Aorta (tissue), 5 donors: ENCODE measurements at regions of chr18 and their contacts with region 1.

Region 1: DNA sequence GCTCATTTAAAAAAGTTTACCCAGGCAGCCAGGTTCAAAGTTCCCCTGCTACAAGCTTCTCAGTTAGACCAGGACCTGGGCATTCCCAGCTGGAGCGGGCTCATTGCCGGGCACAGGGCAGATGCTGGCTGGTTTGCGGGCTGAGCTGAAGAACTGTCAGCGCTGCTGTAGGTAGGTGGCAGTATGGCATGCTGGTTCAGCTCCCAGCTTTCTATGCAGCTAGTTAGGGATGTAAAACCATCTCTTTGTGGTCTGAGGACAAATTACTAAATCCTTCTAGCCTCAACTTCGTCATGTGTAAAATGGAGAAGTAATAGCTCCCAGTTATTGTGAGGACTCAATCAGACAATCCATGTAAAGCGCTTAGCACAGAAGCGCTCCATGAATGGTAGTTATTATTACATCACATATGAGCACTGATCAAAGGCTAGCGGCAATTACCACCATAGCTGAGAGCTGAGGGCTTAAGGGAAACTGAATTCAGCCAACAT is 2.4 kb upstream of the LDLRAD4 start:
- DNase-seq: peak; percentile 88 to 89
- ATAC-seq: peak; percentile 85
- H3K4me3 ChIP-seq: no peak overlapping the region
- H3K27ac ChIP-seq: peak overlapping the region in 1 of 2 donors; percentile 48
- H3K4me1 ChIP-seq: peaks cover 0 to 3% of the 10 kb centered on the region in 2 donors
- H3K27me3 ChIP-seq: no peaks in the 10 kb centered on the region

Region 2: GRCh38 chr18:13381944-13382365 is 165.8 kb after region 1 on chr18:
- intact Hi-C with region 1: loop called (anchors 2 kb)
- DNase-seq: peak; percentile 91
- ATAC-seq: peak; percentile 93
- H3K4me3 ChIP-seq: no peak overlapping the region
- H3K27ac ChIP-seq: peak overlapping the region; percentile 78 to 86
- H3K4me1 ChIP-seq: peaks cover 0 to 9% of the 10 kb centered on the region in 2 donors
- H3K27me3 ChIP-seq: no peaks in the 10 kb centered on the region

Region 3: GRCh38 chr18:13420969-13421686 is 205.0 kb after region 1 on chr18:
- intact Hi-C with region 1: loop called in 1 of 2 experiments (anchors 5 kb)
- DNase-seq: no peak
- ATAC-seq: no peak
- H3K4me3 ChIP-seq: no peak overlapping the region
- H3K27ac ChIP-seq: no peak overlapping the region
- H3K4me1 ChIP-seq: peaks cover under 1 to 2% of the 10 kb centered on the region in 2 donors
- H3K27me3 ChIP-seq: no peaks in the 10 kb centered on the region

Region 4: GRCh38 chr18:13435596-13436327 is 219.6 kb after region 1 on chr18:
- intact Hi-C with region 1: loop called in 1 of 2 experiments (anchors 5 kb)
- DNase-seq: peak; percentile 75 to 87
- ATAC-seq: peak; percentile 82
- H3K4me3 ChIP-seq: no peak overlapping the region
- H3K27ac ChIP-seq: peak overlapping the region; percentile 8 to 97
- H3K4me1 ChIP-seq: peaks cover 3 to 8% of the 10 kb centered on the region in 2 donors
- H3K27me3 ChIP-seq: no peaks in the 10 kb centered on the region

Region 5: GRCh38 chr18:13530879-13531387 is 314.8 kb after region 1 on chr18:
- intact Hi-C with region 1: loop called (anchors 1 to 2 kb)
- DNase-seq: peak; percentile 80 to 89
- ATAC-seq: peak; percentile 89
- H3K4me3 ChIP-seq: no peak overlapping the region
- H3K27ac ChIP-seq: no peak overlapping the region
- H3K4me1 ChIP-seq: no peaks in the 10 kb centered on the region
- H3K27me3 ChIP-seq: no peaks in the 10 kb centered on the region

Region 6: DNA sequence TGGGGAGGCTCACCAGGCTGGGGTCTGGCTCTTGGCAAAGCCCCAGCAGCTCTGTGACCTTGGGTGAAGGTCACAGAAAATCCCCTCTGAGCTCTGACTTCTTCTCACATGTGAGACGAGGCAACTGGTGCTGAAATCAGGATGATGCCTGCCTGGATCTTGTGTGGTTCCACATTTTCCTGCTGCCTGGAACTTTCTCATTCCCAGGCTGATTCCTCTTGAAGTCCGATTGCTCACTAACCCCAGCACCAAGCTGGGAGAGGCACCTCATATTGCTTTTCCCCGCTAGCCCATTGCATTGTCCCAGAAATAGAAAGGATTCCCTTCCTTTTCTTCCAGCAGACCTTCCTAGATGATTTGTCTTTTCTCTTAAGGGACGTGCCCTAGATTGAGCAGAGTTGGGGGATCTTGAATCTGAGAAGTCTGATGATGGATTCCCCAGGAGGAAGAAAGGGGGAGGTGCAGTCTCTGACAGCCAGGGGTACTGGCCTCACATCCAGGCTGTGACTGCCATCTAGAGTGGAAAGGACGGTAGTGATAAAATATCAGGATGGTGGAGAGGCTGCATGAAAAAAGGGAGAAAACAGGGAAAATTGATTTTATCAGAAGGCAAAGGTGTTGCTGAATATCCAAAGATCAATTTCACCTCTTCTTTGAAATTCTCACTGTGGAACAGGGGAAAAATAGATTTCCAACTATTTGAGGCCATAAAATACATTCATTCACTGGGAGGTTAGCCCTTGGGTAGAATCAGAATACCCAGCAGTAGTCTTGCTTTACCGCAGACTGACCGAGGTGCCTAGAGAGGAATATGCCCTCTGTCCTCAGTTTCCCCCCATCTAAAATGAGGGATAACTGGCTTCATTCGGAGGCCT is 413.9 kb after region 1 on chr18:
- intact Hi-C with region 1: loop called (anchors 5 kb)
- DNase-seq: no peak
- ATAC-seq: peak; percentile 82
- H3K4me3 ChIP-seq: no peak overlapping the region
- H3K27ac ChIP-seq: no peak overlapping the region
- H3K4me1 ChIP-seq: no peaks in the 10 kb centered on the region
- H3K27me3 ChIP-seq: no peaks in the 10 kb centered on the region

Region 7: GRCh38 chr18:13726232-13726971 is 510.3 kb after region 1 on chr18 and contains the starts of genes FAM210A and RNMT:
- intact Hi-C with region 1: loop called in 1 of 2 experiments (anchors 5 kb)
- DNase-seq: peak; percentile 98 to 99
- ATAC-seq: peak; percentile 99
- H3K4me3 ChIP-seq: peak within 1 kb of the TSS; percentile 71 to 90
- H3K27ac ChIP-seq: peak within 1 kb of the TSS; percentile 49 to 84
- H3K4me1 ChIP-seq: peaks cover 0 to 3% of the 10 kb centered on the region in 2 donors
- H3K27me3 ChIP-seq: no peaks in the 10 kb centered on the region
- total RNA-seq, gene FAM210A: 12.2 to 14.7 TPM
- total RNA-seq, gene RNMT: 25.3 to 30.2 TPM